PC-9 (cell line): ENCODE measurements at regions of chr3 and their contacts with region 1.

Region 1: GRCh38 chr3:109275702-109276293 is 40.5 kb downstream of the DPPA2 start:
- DNase-seq: peak in 1 of 2 experiments; percentile 38
- H3K4me3 ChIP-seq: no peak overlapping the region
- H3K27ac ChIP-seq: no peak overlapping the region
- H3K4me1 ChIP-seq: no peaks in the 10 kb centered on the region
- H3K27me3 ChIP-seq: no peaks in the 10 kb centered on the region
- CTCF ChIP-seq: peak; percentile 76

Region 2: DNA sequence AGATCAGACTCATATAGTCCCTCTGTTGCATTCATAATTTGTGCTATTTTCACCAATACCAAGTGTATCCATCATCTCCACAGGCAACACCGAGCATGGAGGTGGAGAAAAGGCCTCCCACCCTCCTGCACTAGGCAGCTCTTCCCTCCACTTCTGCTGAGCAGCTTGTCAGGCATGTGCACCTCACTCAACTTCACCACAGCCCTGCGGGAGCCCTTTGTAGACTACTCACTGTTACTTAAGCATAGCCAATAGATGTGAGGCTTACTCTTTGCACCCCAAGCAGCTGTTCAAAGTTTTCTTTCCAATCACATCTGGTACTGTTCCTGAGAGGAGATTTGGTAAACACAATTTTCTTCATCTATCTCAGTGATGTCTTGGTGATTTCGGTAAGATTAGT is 305.2 kb before region 1 on chr3:
- CTCF ChIA-PET with region 1: no interaction called
- POLR2A ChIA-PET with region 1: no interaction called
- intact Hi-C with region 1: no loop called
- DNase-seq: no peak
- H3K4me3 ChIP-seq: no peak overlapping the region
- H3K27ac ChIP-seq: no peak overlapping the region
- H3K4me1 ChIP-seq: no peaks in the 10 kb centered on the region
- H3K27me3 ChIP-seq: no peaks in the 10 kb centered on the region
- CTCF ChIP-seq: no peak

Region 3: GRCh38 chr3:109413049-109413448 is 137.3 kb after region 1 on chr3:
- CTCF ChIA-PET with region 1: no interaction called
- POLR2A ChIA-PET with region 1: no interaction called
- intact Hi-C with region 1: loop called (anchors 10 kb)
- DNase-seq: no peak
- H3K4me3 ChIP-seq: no peak overlapping the region
- H3K27ac ChIP-seq: no peak overlapping the region
- H3K4me1 ChIP-seq: no peaks in the 10 kb centered on the region
- H3K27me3 ChIP-seq: no peaks in the 10 kb centered on the region
- CTCF ChIP-seq: no peak